Sciatic nerve (tissue), 2 donors: ENCODE measurements at regions of chr2 and their contacts with region 1.

Region 1: GRCh38 chr2:60446413-60447267 is 106.8 kb downstream of the BCL11A start:
- DNase-seq: no peak
- ATAC-seq: no peak

Region 2: DNA sequence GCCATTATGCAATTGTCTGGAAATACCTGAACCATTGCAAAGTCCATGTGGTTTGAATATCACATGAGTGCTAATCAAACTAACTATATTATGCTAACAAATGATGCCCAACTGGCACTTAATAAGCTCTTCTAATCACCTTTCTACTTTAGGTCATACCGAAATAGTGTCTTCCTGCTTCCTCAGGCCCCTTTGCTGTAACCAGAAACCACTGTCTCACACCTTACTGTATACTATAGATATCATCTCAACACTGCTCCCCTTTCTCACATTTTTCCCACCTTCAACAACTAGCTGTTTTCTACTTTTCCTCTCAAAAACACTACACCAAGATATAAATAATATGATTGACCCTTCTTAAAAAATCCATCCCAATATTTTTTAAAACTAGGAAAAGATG is 527.1 kb before region 1 on chr2:
- intact Hi-C with region 1: loop called (anchors 5 kb)
- DNase-seq: no peak
- ATAC-seq: no peak

Region 3: GRCh38 chr2:60544062-60544461 is 97.4 kb after region 1 on chr2:
- intact Hi-C with region 1: no loop called
- DNase-seq: no peak
- ATAC-seq: no peak